ENCODE measurements at regions of chr3 and their contacts with region 1.

Region 1: DNA sequence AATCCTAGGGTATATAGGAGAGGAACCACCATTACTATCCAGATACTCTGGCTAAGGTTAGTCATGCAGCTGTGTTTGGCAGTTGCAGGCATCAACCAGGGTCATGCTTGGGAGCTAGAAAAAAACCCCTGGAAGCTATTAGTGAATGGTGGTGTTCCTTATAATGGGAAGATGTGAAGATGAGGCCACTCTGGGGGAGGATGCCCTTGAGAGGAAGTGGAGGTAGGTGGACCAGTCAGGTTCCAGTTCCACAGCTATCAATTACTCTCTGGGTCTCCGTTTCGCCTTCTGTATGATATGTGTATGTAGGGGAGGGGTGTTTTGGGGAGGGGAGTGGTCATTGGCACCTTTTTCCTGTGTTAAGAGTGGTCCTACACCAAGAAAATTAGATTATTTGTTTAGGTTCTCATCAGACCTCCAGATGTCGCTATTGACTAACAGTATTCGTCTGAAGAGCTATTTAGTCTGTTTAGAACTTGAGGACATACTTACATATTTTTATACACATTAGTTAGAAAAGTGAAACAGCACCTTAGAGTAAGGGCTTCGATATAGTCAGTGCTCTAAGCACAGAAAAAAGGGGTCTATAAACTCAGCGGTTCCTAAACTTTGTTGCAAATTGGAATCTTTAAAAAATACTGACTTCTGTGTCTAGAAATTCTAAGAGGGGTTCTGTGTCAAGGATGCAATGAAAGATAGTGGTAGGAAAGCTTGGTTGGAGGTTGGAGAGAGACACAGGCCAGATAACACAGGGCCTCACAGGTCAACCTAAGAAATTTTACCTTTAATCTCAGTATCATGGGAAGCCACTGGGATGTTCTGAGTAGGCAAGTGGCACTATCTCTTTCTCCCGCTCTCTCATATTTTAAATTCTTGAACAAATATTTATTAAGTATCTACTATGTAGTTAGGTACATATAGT is 9.1 kb upstream of the HPS3 start:
- DNase-seq: peak; percentile 46
- H3K4me3 Mint-ChIP-seq: no peak overlapping the region
- H3K27ac Mint-ChIP-seq: no peak overlapping the region
- H3K4me1 Mint-ChIP-seq: peaks cover 3% of the 10 kb centered on the region
- H3K27me3 Mint-ChIP-seq: peaks cover 5% of the 10 kb centered on the region

Region 2: DNA sequence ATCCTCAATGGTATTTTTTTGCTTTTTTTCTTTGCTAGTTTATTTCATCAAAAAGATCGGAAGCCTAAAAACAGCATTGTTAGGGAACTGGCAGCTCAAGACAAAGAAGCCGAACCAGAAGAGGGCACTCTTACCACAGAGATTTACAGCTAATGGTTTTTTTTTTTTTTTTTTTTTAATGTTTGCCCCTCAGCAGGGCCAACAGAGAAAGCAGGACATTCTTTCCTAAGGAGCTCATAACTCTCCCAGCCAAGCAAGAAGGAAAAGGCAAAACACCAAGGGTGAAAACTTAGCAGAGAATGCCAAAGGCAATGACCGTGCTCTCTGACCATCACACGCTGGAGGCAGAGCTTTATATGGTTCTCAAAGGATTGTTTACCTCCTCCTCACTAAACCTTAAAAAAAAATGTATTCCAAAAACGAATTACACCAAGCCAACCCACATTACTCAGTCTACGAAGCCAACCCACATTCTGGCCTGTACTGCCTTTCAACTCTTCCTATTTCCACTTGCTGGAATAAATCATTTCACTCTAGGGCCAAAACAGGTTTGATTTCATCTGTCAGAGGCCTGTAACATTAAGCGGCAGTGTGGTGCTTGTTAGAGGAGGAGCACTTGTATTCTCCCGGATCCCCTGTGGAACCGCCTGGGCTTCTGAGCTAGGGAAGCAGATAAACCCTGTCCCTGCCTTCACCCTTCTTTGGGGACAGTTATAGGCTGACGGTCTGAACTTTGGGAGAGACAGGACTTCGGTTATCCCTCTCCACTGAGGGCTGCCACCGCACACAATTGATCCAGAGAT is 164.6 kb before region 1 on chr3:
- CTCF ChIA-PET with region 1: interaction called, 18 read pairs
- POLR2A ChIA-PET with region 1: no interaction called
- DNase-seq: peak; percentile 49
- H3K4me3 Mint-ChIP-seq: no peak overlapping the region
- H3K27ac Mint-ChIP-seq: no peak overlapping the region
- H3K4me1 Mint-ChIP-seq: peaks cover 11% of the 10 kb centered on the region
- H3K27me3 Mint-ChIP-seq: peaks cover 3% of the 10 kb centered on the region

Region 3: DNA sequence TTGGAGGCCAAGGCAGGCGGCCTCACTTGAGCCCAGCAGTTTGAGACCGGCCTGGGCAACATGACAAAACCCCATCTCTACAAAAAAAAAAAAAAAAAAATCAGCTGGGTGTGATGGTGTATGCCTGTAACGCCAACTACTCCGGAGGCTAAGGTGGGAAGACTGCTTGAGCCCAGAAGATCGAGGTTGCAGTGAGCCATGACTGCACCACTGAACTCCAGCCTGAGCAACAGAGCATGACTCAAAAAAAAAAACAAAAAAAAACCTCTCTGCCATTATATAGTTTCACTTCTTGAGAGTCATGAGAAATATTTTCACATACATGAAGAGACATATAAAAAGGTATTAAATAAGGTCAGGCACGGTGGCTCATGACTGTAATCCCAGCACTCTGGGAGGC is 147.3 kb after region 1 on chr3:
- CTCF ChIA-PET with region 1: interaction called, 17 read pairs
- POLR2A ChIA-PET with region 1: no interaction called
- DNase-seq: no peak
- H3K4me3 Mint-ChIP-seq: no peak overlapping the region
- H3K27ac Mint-ChIP-seq: no peak overlapping the region
- H3K4me1 Mint-ChIP-seq: no peaks in the 10 kb centered on the region
- H3K27me3 Mint-ChIP-seq: peaks cover 20% of the 10 kb centered on the region

Region 4: GRCh38 chr3:149273096-149273751 is 152.9 kb after region 1 on chr3:
- CTCF ChIA-PET with region 1: interaction called, 17 read pairs
- POLR2A ChIA-PET with region 1: no interaction called
- DNase-seq: peak; percentile 54
- H3K4me3 Mint-ChIP-seq: no peak overlapping the region
- H3K27ac Mint-ChIP-seq: no peak overlapping the region
- H3K4me1 Mint-ChIP-seq: peaks cover 13% of the 10 kb centered on the region
- H3K27me3 Mint-ChIP-seq: peaks cover 9% of the 10 kb centered on the region

Region 5: DNA sequence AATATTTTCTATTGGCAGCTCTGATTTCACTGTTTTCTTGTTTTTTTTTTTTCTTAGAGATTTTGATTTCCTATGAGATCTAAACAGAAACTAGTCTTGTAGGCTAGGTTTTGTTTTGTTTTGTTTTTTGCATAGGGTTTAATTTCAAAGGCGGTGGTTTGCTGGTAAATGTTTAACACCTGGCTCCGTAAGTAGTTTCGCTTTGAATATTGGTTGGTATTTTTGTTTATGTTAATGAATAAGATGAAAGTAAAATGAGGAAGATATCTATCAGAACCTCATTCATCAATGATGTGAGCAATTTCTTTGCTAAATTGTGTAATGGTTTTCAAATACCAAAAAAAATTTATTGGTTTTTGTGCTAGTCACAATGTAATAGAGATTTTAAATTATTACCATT is 296.9 kb after region 1 on chr3:
- CTCF ChIA-PET with region 1: no interaction called
- POLR2A ChIA-PET with region 1: no interaction called
- DNase-seq: no peak
- H3K4me3 Mint-ChIP-seq: no peak overlapping the region
- H3K27ac Mint-ChIP-seq: no peak overlapping the region
- H3K4me1 Mint-ChIP-seq: peaks cover 3% of the 10 kb centered on the region
- H3K27me3 Mint-ChIP-seq: no peaks in the 10 kb centered on the region

Measured in activated CD4-positive, alpha-beta T cell treated with anti-CD3 and anti-CD28 coated beads, Interleukin-2, amount 10 ng/mL, durations not matched to agents 7 days and 5 days (primary cell).